ENCODE measurements at regions of chr2 and their contacts with region 1.

Region 1: GRCh38 chr2:56183643-56184499 is at the start of gene CCDC85A:
- DNase-seq: peak in 8 of 9 donors; percentile 9 to 77 (median 29)
- ATAC-seq: peak; percentile 75
- H3K4me3 ChIP-seq: no peak within 1 kb of the TSS
- H3K4me3 Mint-ChIP-seq: peak within 1 kb of the TSS; percentile 27 to 80 (median 56)
- H3K27ac ChIP-seq: no peak within 1 kb of the TSS
- H3K27ac Mint-ChIP-seq: no peak within 1 kb of the TSS
- H3K4me1 ChIP-seq: no peaks in the 10 kb centered on the region
- H3K4me1 Mint-ChIP-seq: peaks cover 0 to 20% (median 9%) of the 10 kb centered on the region in 7 donors
- H3K27me3 ChIP-seq: peaks cover 0 to 7% of the 10 kb centered on the region in 2 donors
- H3K27me3 Mint-ChIP-seq: peaks cover 56 to 72% (median 67%) of the 10 kb centered on the region in 5 donors
- total RNA-seq, gene CCDC85A: not detected

Region 2: GRCh38 chr2:56749152-56749752 is 565.4 kb after region 1 on chr2:
- CTCF ChIA-PET with region 1: no interaction called
- POLR2A ChIA-PET with region 1: no interaction called
- intact Hi-C with region 1: loop called in 1 of 2 experiments (anchors 5 kb)
- DNase-seq: no peak
- ATAC-seq: no peak
- H3K4me3 ChIP-seq: no peak overlapping the region
- H3K4me3 Mint-ChIP-seq: no peak overlapping the region
- H3K27ac ChIP-seq: no peak overlapping the region
- H3K27ac Mint-ChIP-seq: no peak overlapping the region
- H3K4me1 ChIP-seq: no peaks in the 10 kb centered on the region
- H3K4me1 Mint-ChIP-seq: no peaks in the 10 kb centered on the region
- H3K27me3 ChIP-seq: no peaks in the 10 kb centered on the region
- H3K27me3 Mint-ChIP-seq: no peaks in the 10 kb centered on the region

Region 3: DNA sequence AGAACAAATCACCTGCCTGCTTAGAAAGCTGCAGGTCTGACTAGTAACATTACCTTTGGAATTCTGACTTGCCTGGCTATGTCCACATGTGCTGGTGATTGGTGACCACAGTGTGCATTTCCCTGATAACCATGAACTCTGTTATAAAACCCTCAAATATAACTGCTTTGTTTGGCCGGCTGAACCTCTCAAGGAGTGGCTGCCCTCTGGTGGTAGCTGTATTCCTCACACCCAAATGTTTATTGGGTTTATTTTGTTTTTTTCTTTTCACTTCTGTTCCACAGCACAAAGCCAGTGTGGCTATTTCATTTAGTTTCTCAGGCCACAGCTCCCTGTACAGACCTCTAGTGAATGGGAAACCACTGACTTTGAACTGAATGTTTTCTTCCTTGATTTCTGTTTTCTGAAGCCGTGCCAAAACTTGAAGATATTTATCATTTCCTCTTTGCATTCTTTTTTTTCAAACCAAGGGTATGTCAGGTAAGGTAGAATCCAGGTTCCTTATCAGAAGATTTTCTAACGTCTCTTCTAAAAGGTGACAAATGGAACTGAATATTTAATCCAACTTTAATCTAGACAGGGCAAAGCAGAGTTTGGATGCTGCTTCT is 1313.7 kb after region 1 on chr2:
- CTCF ChIA-PET with region 1: no interaction called
- POLR2A ChIA-PET with region 1: no interaction called
- intact Hi-C with region 1: loop called in 1 of 2 experiments (anchors 5 kb)
- DNase-seq: peak in 3 of 9 donors; percentile 2 to 20 (median 10)
- ATAC-seq: peak; percentile 56
- H3K4me3 ChIP-seq: no peak overlapping the region
- H3K4me3 Mint-ChIP-seq: no peak overlapping the region
- H3K27ac ChIP-seq: no peak overlapping the region
- H3K27ac Mint-ChIP-seq: no peak overlapping the region
- H3K4me1 ChIP-seq: no peaks in the 10 kb centered on the region
- H3K4me1 Mint-ChIP-seq: peaks cover 0 to 4% (median 0%) of the 10 kb centered on the region in 7 donors
- H3K27me3 ChIP-seq: no peaks in the 10 kb centered on the region
- H3K27me3 Mint-ChIP-seq: no peaks in the 10 kb centered on the region

Region 4: GRCh38 chr2:57516698-57517340 is 1332.9 kb after region 1 on chr2:
- CTCF ChIA-PET with region 1: no interaction called
- POLR2A ChIA-PET with region 1: no interaction called
- intact Hi-C with region 1: loop called in 1 of 2 experiments (anchors 1 kb)
- DNase-seq: peak in 5 of 9 donors; percentile 7 to 25 (median 11)
- ATAC-seq: peak; percentile 52
- H3K4me3 ChIP-seq: no peak overlapping the region
- H3K4me3 Mint-ChIP-seq: no peak overlapping the region
- H3K27ac ChIP-seq: no peak overlapping the region
- H3K27ac Mint-ChIP-seq: no peak overlapping the region
- H3K4me1 ChIP-seq: no peaks in the 10 kb centered on the region
- H3K4me1 Mint-ChIP-seq: no peaks in the 10 kb centered on the region
- H3K27me3 ChIP-seq: no peaks in the 10 kb centered on the region
- H3K27me3 Mint-ChIP-seq: peaks cover 0 to 4% (median 0%) of the 10 kb centered on the region in 5 donors

Measured in naive thymus-derived CD4-positive, alpha-beta T cell (primary cell).